ENCODE measurements at regions of chr1 and their contacts with region 1.

Region 1: GRCh38 chr1:159936273-159936904 is 9.0 kb downstream of the IGSF9 start:
- ATAC-seq: peak; percentile 13 to 86 (median 34)
- H3K4me3 ChIP-seq: no peak overlapping the region
- H3K27ac ChIP-seq: peak overlapping the region in 1 of 2 donors; percentile 67
- H3K4me1 ChIP-seq: peaks cover 28 to 30% of the 10 kb centered on the region in 2 donors

Region 2: GRCh38 chr1:160078512-160079195 is 142.3 kb after region 1 on chr1:
- in situ Hi-C with region 1: loop called in 3 of 9 experiments (anchors 10 to 25 kb)
- ATAC-seq: peak in 3 of 8 experiments; percentile 77 to 93 (median 92)
- H3K4me3 ChIP-seq: no peak overlapping the region
- H3K27ac ChIP-seq: no peak overlapping the region
- H3K4me1 ChIP-seq: peaks cover 14 to 15% of the 10 kb centered on the region in 2 donors

Measured in motor neuron (in vitro differentiated cells).